ENCODE measurements at regions of chr17 and their contacts with region 1.

Region 1: GRCh38 chr17:43994272-43995149 is 9.9 kb upstream of the NAGS start:
- DNase-seq: no peak
- H3K4me3 ChIP-seq: peak overlapping the region; percentile 33
- H3K27me3 ChIP-seq: peaks cover 5% of the 10 kb centered on the region
- CTCF ChIP-seq: peak; percentile 89

Region 2: DNA sequence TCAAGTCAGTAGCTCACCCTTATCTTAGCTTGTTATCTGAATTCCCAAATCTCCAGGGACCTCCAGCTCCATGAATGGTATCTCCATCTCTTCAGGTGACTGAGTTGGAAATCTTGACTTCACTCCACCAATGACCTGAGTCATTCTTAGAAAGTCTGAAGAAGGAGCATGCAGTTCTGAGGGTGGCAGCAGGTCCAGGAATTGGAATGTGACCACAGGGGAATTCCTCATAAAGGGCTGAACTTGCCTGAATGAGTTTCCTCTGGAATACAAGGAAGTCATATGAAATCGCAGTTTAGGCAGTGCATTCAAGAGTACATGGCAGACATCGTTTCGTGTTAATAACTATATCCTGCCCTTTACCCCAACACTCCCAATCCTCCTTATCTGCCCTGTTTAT is 28.2 kb before region 1 on chr17:
- CTCF ChIA-PET with region 1: interaction called, 10 read pairs
- POLR2A ChIA-PET with region 1: no interaction called
- DNase-seq: no peak
- H3K4me3 ChIP-seq: no peak overlapping the region
- H3K27me3 ChIP-seq: peaks cover 4% of the 10 kb centered on the region; the same call in 1 of the 2 replicates
- CTCF ChIP-seq: no peak

Region 3: DNA sequence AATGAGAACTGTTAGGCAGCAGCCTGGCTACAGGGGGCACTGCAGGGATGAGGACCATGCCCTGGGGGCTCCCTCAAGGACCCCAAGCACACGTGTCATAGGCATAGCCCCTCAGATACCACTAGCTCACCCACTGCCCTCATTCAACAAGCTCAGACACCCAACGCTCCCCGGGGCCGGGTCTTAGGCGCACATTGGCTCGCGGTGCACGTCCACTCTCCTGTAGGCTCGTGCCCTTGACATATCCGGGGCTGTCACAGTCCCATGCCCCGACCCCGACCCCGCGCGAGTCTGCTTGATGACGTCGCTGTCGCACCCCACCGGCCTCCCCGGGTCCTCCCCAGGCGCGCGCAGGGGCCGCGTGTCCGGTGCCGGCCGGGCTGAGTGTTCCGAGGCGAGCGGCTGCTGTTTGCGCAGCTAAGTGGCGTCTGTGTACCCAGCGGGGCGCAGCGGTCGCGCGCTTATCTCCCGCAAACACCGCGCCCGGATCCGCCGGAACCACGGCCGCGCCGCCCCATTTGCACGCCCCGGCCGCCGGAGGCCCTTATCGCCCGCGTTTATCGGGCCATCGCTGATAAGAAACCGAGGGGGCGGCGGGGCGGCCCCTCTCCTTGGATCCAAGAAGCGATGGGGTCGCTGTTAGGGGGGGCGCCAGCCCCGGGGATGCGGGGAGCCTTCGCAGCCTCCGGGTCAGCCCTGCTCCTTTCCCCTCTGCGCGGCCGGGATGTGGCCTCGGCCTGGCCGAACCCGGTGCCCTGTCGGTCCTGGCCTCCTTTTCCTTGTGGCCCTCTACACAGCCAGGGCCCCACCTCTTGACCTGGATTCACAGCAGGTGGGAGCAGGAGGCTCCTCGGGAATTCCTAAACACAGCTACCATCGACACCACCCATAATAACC is 10.7 kb before region 1 on chr17:
- CTCF ChIA-PET with region 1: interaction called, 28 read pairs
- POLR2A ChIA-PET with region 1: no interaction called
- DNase-seq: no peak
- H3K4me3 ChIP-seq: peak overlapping the region; percentile 27
- H3K27me3 ChIP-seq: peaks cover 22% of the 10 kb centered on the region
- CTCF ChIP-seq: peak; percentile 42

Measured in BJ (cell line).